Heart right ventricle (tissue), 16 donors: ENCODE measurements at regions of chr3 and their contacts with region 1.

Region 1: DNA sequence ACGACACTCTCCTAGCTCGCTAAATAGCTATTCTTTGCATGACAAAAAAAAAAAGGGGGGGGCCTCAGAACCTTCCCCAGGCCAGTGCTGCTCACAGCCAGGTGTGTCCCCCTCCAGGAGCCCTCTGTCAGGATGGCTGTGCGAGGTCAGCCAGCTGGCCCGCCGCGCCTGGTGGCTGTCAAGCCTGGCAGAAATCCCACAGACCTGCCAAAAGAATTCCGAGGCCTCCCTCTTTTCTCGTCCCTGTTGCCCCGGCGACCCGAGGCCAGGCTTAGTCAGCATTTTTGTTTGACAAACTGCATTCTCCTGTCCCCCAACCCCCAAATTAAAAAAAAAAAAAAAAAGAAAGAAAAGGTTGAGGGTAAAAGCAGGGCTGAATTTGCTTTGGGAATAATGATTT is 61.9 kb downstream of the TM4SF4 start:
- DNase-seq: peak; percentile 76 to 78
- ATAC-seq: peak; percentile 77 to 91 (median 86)
- H3K4me3 ChIP-seq: peak overlapping the region in 4 of 10 donors; percentile 8 to 13 (median 11)
- H3K27ac ChIP-seq: peak overlapping the region in 5 of 10 donors; percentile 5 to 53 (median 23)
- H3K4me1 ChIP-seq: peaks cover 8 to 75% (median 52%) of the 10 kb centered on the region in 9 donors
- H3K27me3 ChIP-seq: no peaks in the 10 kb centered on the region
- CTCF ChIP-seq: no peak

Region 2: GRCh38 chr3:149393345-149394160 is 142.9 kb before region 1 on chr3:
- intact Hi-C with region 1: no loop called
- DNase-seq: peak; percentile 55 to 76
- ATAC-seq: peak in 7 of 8 donors; percentile 72 to 90 (median 86)
- H3K4me3 ChIP-seq: no peak overlapping the region
- H3K27ac ChIP-seq: peak overlapping the region in 5 of 10 donors; percentile 16 to 71 (median 28)
- H3K4me1 ChIP-seq: peaks cover 0 to 40% (median 21%) of the 10 kb centered on the region in 9 donors
- H3K27me3 ChIP-seq: no peaks in the 10 kb centered on the region
- CTCF ChIP-seq: peak; percentile 56 to 94 (median 83)

Region 3: GRCh38 chr3:149566292-149566975 is 30.0 kb after region 1 on chr3:
- intact Hi-C with region 1: loop called in 1 of 10 experiments (anchors 5 kb)
- DNase-seq: no peak
- ATAC-seq: peak in 3 of 8 donors; percentile 10 to 31 (median 16)
- H3K4me3 ChIP-seq: no peak overlapping the region
- H3K27ac ChIP-seq: peak overlapping the region in 3 of 10 donors; percentile 7 to 59 (median 11)
- H3K4me1 ChIP-seq: peaks cover 2 to 56% (median 36%) of the 10 kb centered on the region in 9 donors
- H3K27me3 ChIP-seq: no peaks in the 10 kb centered on the region
- CTCF ChIP-seq: no peak

Region 4: DNA sequence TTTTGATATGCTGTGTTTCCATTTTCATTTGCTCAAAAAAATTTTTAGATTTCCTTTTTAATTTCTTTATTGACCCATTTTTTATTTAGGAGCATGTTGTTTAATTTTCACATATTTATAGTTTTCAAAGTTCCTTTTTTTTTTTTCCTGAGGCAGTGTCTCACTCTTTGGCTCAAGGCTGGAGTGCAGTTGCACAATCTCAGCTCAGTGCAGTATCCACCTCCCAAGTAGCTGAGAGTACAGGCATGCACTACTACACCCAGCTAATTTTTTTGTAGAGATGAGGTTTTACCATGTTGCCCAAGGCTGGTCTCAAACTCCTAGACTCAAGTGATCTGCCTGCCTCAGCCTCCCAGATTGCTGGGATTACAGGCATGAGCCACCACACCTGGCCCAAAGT is 398.1 kb after region 1 on chr3:
- intact Hi-C with region 1: no loop called
- DNase-seq: no peak
- ATAC-seq: peak in 7 of 8 donors; percentile 49 to 88 (median 57)
- H3K4me3 ChIP-seq: no peak overlapping the region
- H3K27ac ChIP-seq: no peak overlapping the region
- H3K4me1 ChIP-seq: peaks cover 0 to 21% (median 5%) of the 10 kb centered on the region in 9 donors
- H3K27me3 ChIP-seq: no peaks in the 10 kb centered on the region
- CTCF ChIP-seq: no peak